ENCODE measurements at regions of chr6 and their contacts with region 1.

Region 1: GRCh38 chr6:111534231-111534751 is 51.3 kb upstream of the REV3L start:
- DNase-seq: no peak
- H3K4me3 Mint-ChIP-seq: no peak overlapping the region
- H3K27ac Mint-ChIP-seq: no peak overlapping the region
- H3K4me1 Mint-ChIP-seq: peaks cover 49% of the 10 kb centered on the region
- H3K27me3 Mint-ChIP-seq: no peaks in the 10 kb centered on the region

Region 2: DNA sequence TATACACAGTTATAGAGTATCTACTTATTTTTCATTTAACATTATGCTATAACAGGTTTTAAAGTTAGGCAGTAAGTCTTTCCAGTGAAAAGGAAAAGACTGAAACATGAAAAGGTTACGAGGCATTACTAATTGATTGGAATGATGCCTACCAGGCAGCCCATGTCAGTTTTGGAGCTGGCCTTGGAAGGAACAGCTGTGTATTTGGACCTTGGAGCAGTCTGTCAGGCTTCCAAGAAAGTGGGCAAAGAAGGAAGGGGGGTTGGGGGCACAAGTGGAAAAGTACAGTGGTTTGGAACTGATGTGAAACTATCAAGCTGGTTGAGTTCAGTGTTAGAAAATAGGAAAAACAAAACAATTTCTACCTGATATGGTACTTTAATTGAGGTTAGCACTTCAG is 405.3 kb before region 1 on chr6:
- intact Hi-C with region 1: no loop called
- DNase-seq: no peak
- H3K4me3 Mint-ChIP-seq: no peak overlapping the region
- H3K27ac Mint-ChIP-seq: no peak overlapping the region
- H3K4me1 Mint-ChIP-seq: no peaks in the 10 kb centered on the region
- H3K27me3 Mint-ChIP-seq: no peaks in the 10 kb centered on the region

Region 3: GRCh38 chr6:111517965-111518364 is 16.3 kb before region 1 on chr6:
- intact Hi-C with region 1: no loop called
- DNase-seq: no peak
- H3K4me3 Mint-ChIP-seq: no peak overlapping the region
- H3K27ac Mint-ChIP-seq: no peak overlapping the region
- H3K4me1 Mint-ChIP-seq: peaks cover 16% of the 10 kb centered on the region
- H3K27me3 Mint-ChIP-seq: no peaks in the 10 kb centered on the region

Region 4: DNA sequence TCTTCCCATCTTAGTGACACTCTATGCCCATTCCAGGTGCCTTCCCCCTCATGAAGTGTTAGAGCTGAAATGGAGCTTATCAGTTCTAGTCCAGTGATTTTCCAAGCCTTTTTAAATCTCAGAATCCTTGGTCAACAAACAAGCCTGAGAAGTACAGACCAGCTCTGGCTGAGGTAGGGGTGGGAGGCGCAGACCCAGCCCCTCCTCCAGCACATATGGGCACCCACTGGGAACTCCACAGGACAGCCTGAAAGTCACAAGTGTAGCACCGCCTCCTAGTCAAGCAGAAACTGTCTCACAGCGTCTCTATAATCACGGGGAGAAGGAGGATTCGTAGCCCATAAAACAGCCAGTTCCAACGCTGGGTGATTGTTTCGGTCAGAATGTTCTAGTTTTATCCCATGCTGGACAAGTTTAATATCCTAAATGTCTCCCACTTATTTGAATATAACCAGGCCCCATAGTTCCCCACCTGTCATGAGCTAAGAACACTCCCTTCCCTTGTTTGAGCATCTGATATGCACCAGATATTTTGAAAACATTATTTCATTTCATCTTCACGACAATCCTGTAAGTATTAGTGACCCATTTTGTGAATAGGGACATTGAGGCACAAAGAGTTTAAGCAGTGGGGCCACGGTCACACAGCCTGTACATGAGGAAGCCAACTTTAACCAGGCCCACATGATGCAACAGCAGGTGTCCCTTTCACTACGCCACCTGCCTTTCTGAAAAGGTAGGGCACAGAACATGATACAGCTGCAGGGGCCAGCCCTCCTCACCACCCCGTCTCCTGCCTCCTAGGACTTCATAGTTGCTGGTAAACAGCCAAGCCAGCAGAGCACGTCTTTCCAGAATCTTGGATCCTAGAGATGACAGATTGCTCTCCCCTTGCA is 31.3 kb after region 1 on chr6:
- intact Hi-C with region 1: loop called (anchors 1 kb)
- DNase-seq: no peak
- H3K4me3 Mint-ChIP-seq: no peak overlapping the region
- H3K27ac Mint-ChIP-seq: peak overlapping the region; percentile 83
- H3K4me1 Mint-ChIP-seq: peaks cover 48% of the 10 kb centered on the region
- H3K27me3 Mint-ChIP-seq: no peaks in the 10 kb centered on the region

Region 5: DNA sequence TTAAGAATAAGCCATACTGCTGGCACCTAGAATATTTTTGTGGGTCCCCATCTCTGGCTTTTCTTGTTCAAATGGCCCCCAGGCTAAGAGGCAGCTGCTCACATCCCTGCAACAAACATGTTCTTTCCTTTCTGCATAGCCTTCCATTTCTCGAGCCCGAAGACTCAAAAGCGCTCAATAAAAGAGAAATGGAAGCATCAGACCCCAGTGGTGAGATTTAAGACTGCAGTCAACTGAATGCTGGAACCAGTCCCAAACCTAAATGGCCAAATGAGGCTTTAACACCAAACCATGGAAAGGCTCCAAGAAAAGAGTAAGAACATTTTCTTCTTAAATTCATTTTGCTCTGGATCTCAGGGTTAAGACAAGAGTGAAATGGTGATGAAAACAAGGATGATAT is 193.5 kb after region 1 on chr6:
- intact Hi-C with region 1: no loop called
- DNase-seq: no peak
- H3K4me3 Mint-ChIP-seq: no peak overlapping the region
- H3K27ac Mint-ChIP-seq: no peak overlapping the region
- H3K4me1 Mint-ChIP-seq: peaks cover 68% of the 10 kb centered on the region
- H3K27me3 Mint-ChIP-seq: no peaks in the 10 kb centered on the region

Region 6: GRCh38 chr6:111812060-111813038 is 278.1 kb after region 1 on chr6:
- intact Hi-C with region 1: loop called (anchors 5 kb)
- DNase-seq: no peak
- H3K4me3 Mint-ChIP-seq: peak overlapping the region; percentile 32
- H3K27ac Mint-ChIP-seq: peak overlapping the region; percentile 95
- H3K4me1 Mint-ChIP-seq: peaks cover 74% of the 10 kb centered on the region
- H3K27me3 Mint-ChIP-seq: no peaks in the 10 kb centered on the region